RWPE1 (cell line): ENCODE measurements at regions of chr1 and their contacts with region 1.

Region 1: DNA sequence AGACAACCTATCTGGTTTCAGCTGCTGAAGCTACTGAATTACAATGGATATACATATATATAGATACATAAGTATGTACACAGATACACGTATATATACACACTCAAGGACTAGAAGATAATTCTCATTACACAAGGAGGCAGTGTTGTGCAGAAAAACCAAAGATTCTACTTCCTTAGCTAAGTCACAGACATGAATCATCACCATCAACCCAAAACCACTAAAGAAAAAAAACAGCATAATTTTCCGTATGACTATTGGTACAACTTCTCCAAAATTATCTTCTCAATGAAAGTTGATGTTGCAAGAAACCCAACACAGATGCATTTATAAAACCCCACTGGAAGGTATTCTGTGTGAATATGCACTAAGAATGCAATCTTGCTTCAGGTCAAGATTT is 36.8 kb upstream of the RPF1 start:
- DNase-seq: peak; percentile 62
- H3K27ac ChIP-seq: no peak overlapping the region
- CTCF ChIP-seq: 0 out of 2 replicates have a peak, but pooled peaks have one; percentile 25

Region 2: DNA sequence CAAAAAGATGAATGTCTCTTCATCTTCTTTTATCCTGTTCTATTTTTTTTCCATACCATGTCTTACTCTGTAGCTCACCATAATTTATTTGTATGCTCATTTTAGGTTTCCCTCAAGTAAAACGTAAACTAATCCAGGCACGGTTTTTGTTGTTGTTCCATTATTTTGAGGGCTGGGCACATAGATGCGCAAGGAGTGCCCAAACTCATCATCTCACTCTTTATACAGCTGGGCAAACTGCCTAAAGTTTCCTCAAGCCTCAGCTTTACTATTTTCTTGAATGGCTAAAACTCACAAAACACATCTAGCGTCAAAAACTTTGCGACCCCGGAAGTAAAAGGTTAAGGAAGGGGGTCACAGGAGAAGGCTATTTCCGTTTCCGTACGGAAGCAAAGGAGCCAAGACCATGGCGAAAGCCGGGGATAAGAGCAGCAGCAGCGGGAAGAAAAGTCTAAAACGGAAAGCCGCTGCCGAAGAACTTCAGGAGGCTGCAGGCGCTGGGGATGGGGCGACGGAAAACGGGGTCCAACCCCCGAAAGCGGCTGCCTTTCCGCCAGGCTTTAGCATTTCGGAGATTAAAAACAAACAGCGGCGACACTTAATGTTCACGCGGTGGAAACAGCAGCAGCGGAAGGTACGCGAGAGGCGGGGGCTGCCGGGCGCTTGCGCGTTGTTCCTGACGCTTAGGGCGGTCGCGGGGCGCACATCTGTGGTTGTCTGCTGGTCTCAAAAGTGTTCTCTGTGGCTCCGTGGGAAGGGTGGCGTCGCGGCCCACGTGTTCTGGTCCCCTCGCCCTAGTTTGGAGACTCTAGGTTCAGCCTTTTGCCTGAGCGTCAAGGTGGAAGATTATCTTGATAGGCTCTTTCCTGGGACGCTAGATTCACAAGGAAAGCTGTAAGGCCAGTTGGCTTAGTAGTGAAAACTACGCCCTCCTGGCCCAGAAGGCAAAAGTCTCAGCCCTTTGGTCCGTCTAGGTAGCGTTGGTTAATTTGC is 36.9 kb after region 1 on chr1 and contains the start of gene RPF1:
- CTCF ChIA-PET with region 1: interaction called, 10 read pairs
- POLR2A ChIA-PET with region 1: no interaction called
- DNase-seq: peak; percentile 71
- H3K27ac ChIP-seq: peak within 1 kb of the TSS; percentile 91
- CTCF ChIP-seq: no peak

Region 3: GRCh38 chr1:84620720-84621313 is 178.6 kb after region 1 on chr1:
- CTCF ChIA-PET with region 1: interaction called, 13 read pairs
- POLR2A ChIA-PET with region 1: no interaction called
- DNase-seq: peak; percentile 73
- H3K27ac ChIP-seq: peak overlapping the region; percentile 61
- CTCF ChIP-seq: peak; percentile 98

Region 4: DNA sequence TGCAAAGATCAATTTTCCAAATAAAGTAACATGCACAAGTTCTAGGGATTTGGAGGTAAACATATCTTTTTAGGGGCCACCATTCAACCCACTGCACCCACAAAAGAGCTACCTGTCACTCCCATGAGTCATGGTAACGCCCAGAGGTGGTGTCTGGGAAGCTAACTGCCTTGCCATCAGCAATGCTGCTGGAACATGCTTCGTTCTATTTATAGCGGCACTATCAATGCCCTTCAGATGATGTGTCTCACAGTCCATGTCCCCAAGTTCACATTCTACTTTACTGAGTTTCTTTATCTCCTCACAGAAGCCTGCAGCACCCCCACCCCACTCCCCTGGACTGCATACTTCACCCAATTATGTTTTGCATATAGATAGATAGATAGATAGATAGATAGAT is 355.3 kb after region 1 on chr1:
- CTCF ChIA-PET with region 1: no interaction called
- POLR2A ChIA-PET with region 1: no interaction called
- DNase-seq: no peak
- H3K27ac ChIP-seq: no peak overlapping the region
- CTCF ChIP-seq: no peak

Region 5: DNA sequence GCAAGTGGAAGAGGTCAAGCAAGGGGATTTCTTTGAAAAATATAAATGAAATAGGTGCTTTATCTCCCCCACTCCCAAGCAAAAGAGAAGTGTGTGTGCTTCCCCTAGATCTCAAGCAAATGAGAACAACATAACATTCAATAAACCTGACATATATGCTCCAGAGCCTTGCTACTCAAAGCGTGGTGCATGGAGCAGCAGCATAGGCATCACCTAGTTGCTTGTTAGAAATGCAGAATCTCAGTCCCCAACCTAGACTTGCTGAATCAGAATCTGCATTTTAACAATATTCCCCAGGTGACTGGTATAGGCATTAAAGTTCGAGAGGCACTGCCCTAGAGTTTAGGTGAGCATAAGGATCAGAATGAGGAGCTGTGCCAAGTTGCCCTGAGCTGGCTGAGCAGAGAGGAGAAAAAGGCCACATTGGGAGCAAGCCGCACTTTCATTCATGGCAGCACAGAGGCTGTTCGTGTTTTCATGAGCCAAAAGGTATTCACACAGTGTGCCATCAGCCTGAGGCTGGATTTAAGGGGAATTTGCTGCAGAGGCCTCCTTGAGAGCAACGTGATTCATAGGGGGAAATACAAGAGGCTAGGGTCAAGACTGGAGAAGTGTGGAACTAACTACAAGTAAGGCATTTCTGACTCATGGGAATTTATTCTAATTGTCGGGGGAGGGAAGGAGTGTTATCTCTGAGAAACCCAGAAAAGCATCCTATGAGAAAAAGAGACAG is 465.0 kb after region 1 on chr1:
- CTCF ChIA-PET with region 1: no interaction called
- POLR2A ChIA-PET with region 1: no interaction called
- DNase-seq: peak; percentile 54
- H3K27ac ChIP-seq: no peak overlapping the region
- CTCF ChIP-seq: no peak